ENCODE measurements at regions of chr17 and their contacts with region 1.

Region 1: GRCh38 chr17:21304091-21304490 is 19.6 kb downstream of the MAP2K3 start:
- DNase-seq: peak; percentile 13 to 58
- ATAC-seq: no peak
- H3K4me3 ChIP-seq: no peak overlapping the region
- H3K27ac ChIP-seq: no peak overlapping the region
- H3K4me1 ChIP-seq: no peaks in the 10 kb centered on the region
- H3K27me3 ChIP-seq: no peaks in the 10 kb centered on the region
- CTCF ChIP-seq: no peak

Region 2: DNA sequence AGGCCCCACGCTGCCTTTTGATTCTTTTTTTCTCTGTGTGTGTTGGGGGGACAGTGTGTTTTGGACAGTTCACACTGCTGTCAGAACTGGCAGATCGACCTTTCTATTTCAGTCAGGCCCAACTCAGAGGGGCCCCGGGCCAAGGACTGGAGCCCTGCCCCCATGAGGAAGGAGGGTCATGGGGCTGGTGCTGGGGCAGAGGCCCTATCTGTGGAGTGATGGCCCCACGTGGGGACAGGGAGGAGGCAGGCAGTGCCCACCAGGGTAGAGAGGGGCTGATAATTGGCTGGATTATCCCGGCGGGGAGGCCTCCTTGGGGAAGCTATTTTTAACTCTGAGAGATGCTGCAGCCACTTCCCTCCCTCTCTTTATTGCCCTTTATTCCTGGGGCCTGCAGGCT is 66.3 kb after region 1 on chr17:
- intact Hi-C with region 1: no loop called
- DNase-seq: peak in 1 of 2 donors; percentile 84
- ATAC-seq: peak; percentile 50 to 90 (median 81)
- H3K4me3 ChIP-seq: no peak overlapping the region
- H3K27ac ChIP-seq: peak overlapping the region; percentile 71
- H3K4me1 ChIP-seq: peaks cover 21% of the 10 kb centered on the region
- H3K27me3 ChIP-seq: no peaks in the 10 kb centered on the region
- CTCF ChIP-seq: no peak

Region 3: DNA sequence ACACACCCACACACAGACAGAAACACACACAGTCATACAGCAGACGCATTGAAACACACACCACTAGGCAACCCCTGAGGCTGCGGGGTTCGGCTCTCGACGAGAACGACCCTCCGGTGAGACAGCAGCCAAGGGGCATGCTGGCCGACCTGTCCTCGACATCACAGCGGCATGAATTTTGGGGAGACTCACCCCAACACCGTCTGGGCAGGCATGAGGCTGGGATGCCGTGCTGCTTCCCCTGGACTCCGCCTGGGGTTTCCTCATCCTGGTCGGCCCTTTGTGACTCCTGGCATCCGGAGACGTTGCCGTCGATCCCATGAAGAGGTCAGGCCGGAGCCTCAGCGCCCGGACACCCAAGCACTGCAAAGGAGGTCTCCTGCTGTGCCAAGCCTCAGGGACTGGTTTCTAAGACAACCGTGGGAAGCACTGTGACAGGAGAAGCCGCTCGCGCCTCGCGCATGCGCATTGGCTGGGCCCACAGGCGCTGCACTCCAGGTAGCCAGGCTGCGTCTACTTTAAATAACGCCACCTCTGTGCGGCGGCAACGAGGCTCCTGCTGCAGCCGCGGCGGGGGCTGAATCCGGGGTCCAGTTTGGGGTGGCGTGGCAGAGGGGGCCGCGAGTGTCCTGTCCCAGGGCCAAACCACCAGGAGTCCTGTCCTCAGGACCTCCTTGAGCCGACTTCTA is 374.4 kb after region 1 on chr17:
- intact Hi-C with region 1: loop called in 1 of 2 experiments (anchors 10 kb)
- DNase-seq: peak in 1 of 2 donors; percentile 14
- ATAC-seq: no peak
- H3K4me3 ChIP-seq: no peak overlapping the region
- H3K27ac ChIP-seq: no peak overlapping the region
- H3K4me1 ChIP-seq: no peaks in the 10 kb centered on the region
- H3K27me3 ChIP-seq: peaks cover 0 to 4% (median 0%) of the 10 kb centered on the region in 3 donors
- CTCF ChIP-seq: no peak